ENCODE measurements at regions of chr11 and their contacts with region 1.

Region 1: DNA sequence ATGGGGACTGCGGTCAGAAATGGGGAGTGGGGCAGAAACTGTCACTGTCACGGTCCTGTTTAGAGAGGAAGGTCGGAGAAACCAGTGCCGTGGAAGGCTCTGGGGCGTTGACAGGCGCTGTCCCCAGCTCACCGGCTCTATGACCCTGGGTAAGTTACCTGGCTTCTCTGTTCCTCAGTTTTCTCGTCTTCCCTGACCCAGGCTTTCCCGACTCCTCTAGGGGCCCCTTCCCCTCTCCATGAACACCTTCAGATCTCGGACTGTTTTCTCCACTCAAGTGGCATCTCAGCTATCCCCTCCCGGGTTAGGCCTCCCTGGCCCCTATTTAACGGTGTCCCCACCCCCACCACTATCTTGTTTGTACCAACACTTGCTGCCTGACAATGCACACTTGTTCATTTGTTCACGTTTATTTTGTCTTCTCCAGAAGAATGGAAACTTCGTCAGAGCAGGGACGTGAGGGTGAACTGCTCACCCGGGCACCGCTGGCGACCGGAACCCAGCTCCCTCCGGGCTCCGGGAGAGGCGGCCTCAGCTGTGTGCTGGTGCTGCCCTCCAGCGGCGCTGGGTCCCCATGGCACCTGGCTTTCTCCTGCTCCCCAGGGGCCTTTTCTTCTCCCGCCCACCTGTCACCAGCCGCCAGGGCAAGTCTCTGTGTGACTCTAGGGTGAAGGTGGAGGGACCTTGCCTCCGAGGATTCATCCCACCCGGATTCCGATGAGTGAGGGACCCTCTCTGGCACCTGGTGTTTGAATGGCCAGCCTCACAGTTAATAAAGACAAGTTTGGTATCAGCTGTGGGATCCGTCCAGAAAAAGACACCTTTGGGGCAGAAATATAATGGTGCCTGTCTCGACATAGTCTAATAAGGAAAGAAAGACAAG is 33.1 kb upstream of the SLC35C1 start:
- DNase-seq: peak; percentile 68 to 81 (median 72)
- H3K4me3 ChIP-seq: peak overlapping the region; percentile 69 to 92
- H3K4me3 Mint-ChIP-seq: peak overlapping the region; percentile 90 to 95 (median 92)
- H3K27ac ChIP-seq: peak overlapping the region; percentile 64
- H3K27ac Mint-ChIP-seq: peak overlapping the region; percentile 81 to 92 (median 90)
- H3K4me1 ChIP-seq: peaks cover 22% of the 10 kb centered on the region
- H3K4me1 Mint-ChIP-seq: peaks cover 9 to 28% (median 22%) of the 10 kb centered on the region in 4 donors
- H3K27me3 ChIP-seq: no peaks in the 10 kb centered on the region
- H3K27me3 Mint-ChIP-seq: peaks cover 0 to 3% of the 10 kb centered on the region in 2 donors

Region 2: GRCh38 chr11:45339729-45340519 is 431.9 kb before region 1 on chr11:
- CTCF ChIA-PET with region 1: interaction called, 12 read pairs
- POLR2A ChIA-PET with region 1: interaction called, 4 read pairs
- intact Hi-C with region 1: loop called (anchors 1 kb)
- DNase-seq: peak; percentile 85 to 91 (median 87)
- H3K4me3 ChIP-seq: peak overlapping the region in 1 of 2 donors; percentile 36
- H3K4me3 Mint-ChIP-seq: peak overlapping the region; percentile 77 to 89 (median 82)
- H3K27ac ChIP-seq: no peak overlapping the region
- H3K27ac Mint-ChIP-seq: peak overlapping the region in 6 of 7 donors; percentile 16 to 87 (median 68)
- H3K4me1 ChIP-seq: peaks cover 13% of the 10 kb centered on the region
- H3K4me1 Mint-ChIP-seq: peaks cover 7 to 16% (median 10%) of the 10 kb centered on the region in 4 donors
- H3K27me3 ChIP-seq: no peaks in the 10 kb centered on the region
- H3K27me3 Mint-ChIP-seq: peaks cover 15% of the 10 kb centered on the region in 2 donors

Region 3: DNA sequence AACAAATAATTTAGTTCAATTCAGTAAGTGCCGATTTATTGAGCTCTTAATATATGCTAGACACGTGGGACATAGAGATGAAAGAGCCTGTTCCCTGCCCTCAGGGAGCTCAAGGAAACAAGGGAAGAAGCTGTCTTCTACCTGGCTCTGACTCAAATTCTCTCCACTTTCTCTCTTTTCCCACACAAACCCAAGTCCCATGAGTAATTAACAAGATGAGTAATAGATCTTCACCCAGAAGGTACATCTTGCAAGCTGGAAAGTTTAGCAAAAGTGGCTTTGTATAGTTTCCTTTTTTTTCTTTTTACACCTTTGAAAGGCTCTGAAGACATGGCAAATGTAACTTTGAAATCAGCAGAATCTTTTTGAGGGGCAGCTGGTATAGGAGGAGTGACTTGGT is 58.2 kb before region 1 on chr11:
- CTCF ChIA-PET with region 1: no interaction called
- POLR2A ChIA-PET with region 1: no interaction called
- intact Hi-C with region 1: no loop called
- DNase-seq: no peak
- H3K4me3 ChIP-seq: no peak overlapping the region
- H3K4me3 Mint-ChIP-seq: no peak overlapping the region
- H3K27ac ChIP-seq: no peak overlapping the region
- H3K27ac Mint-ChIP-seq: no peak overlapping the region
- H3K4me1 ChIP-seq: no peaks in the 10 kb centered on the region
- H3K4me1 Mint-ChIP-seq: no peaks in the 10 kb centered on the region
- H3K27me3 ChIP-seq: no peaks in the 10 kb centered on the region
- H3K27me3 Mint-ChIP-seq: peaks cover 21 to 40% of the 10 kb centered on the region in 2 donors

Region 4: DNA sequence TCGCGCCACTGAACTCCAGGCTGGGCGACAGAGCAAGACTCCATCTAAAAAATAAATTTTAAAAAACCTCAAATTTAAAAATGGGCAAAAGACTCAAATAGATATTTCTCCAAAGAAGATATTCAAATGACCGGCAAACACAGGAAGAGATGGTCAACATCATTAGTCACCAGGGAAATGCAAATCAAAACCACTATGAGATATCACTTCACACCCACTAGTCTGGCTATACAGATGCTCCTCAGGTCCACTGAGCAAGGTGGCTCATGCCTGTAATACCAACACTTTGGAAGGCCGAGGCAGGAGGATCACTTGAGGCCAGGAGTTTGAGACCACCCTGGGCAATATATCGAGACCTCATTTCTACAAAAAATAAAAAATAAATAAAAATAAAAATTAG is 10.1 kb before region 1 on chr11:
- CTCF ChIA-PET with region 1: interaction called, 14 read pairs
- POLR2A ChIA-PET with region 1: interaction called, 3 read pairs
- intact Hi-C with region 1: no loop called
- DNase-seq: no peak
- H3K4me3 ChIP-seq: no peak overlapping the region
- H3K4me3 Mint-ChIP-seq: no peak overlapping the region
- H3K27ac ChIP-seq: no peak overlapping the region
- H3K27ac Mint-ChIP-seq: no peak overlapping the region
- H3K4me1 ChIP-seq: no peaks in the 10 kb centered on the region
- H3K4me1 Mint-ChIP-seq: no peaks in the 10 kb centered on the region
- H3K27me3 ChIP-seq: no peaks in the 10 kb centered on the region
- H3K27me3 Mint-ChIP-seq: peaks cover 8 to 20% of the 10 kb centered on the region in 2 donors

Region 5: GRCh38 chr11:45804761-45805304 is 33.0 kb after region 1 on chr11 and contains the start of gene SLC35C1:
- CTCF ChIA-PET with region 1: interaction called, 33 read pairs
- POLR2A ChIA-PET with region 1: interaction called, 28 read pairs
- intact Hi-C with region 1: loop called (anchors 1 kb)
- DNase-seq: peak; percentile 93 to 94 (median 93)
- H3K4me3 ChIP-seq: peak within 1 kb of the TSS; percentile 90 to 95
- H3K4me3 Mint-ChIP-seq: peak within 1 kb of the TSS; percentile 90 to 96 (median 92)
- H3K27ac ChIP-seq: peak within 1 kb of the TSS; percentile 83
- H3K27ac Mint-ChIP-seq: peak within 1 kb of the TSS; percentile 83 to 94 (median 92)
- H3K4me1 ChIP-seq: peaks cover 48% of the 10 kb centered on the region
- H3K4me1 Mint-ChIP-seq: peaks cover 30 to 64% (median 38%) of the 10 kb centered on the region in 4 donors
- H3K27me3 ChIP-seq: no peaks in the 10 kb centered on the region
- H3K27me3 Mint-ChIP-seq: no peaks in the 10 kb centered on the region
- total RNA-seq, gene SLC35C1: 20.3 to 21.5 TPM

Region 6: GRCh38 chr11:45834298-45834756 is 62.5 kb after region 1 on chr11:
- CTCF ChIA-PET with region 1: interaction called, 12 read pairs
- POLR2A ChIA-PET with region 1: no interaction called
- intact Hi-C with region 1: no loop called
- DNase-seq: no peak
- H3K4me3 ChIP-seq: no peak overlapping the region
- H3K4me3 Mint-ChIP-seq: peak overlapping the region in 2 of 8 donors; percentile 4 to 77
- H3K27ac ChIP-seq: no peak overlapping the region
- H3K27ac Mint-ChIP-seq: peak overlapping the region in 5 of 7 donors; percentile 8 to 86 (median 81)
- H3K4me1 ChIP-seq: peaks cover 15% of the 10 kb centered on the region
- H3K4me1 Mint-ChIP-seq: peaks cover 8 to 12% (median 11%) of the 10 kb centered on the region in 4 donors
- H3K27me3 ChIP-seq: no peaks in the 10 kb centered on the region
- H3K27me3 Mint-ChIP-seq: peaks cover 0 to 2% of the 10 kb centered on the region in 2 donors

Region 7: GRCh38 chr11:46006418-46007070 is 234.7 kb after region 1 on chr11:
- CTCF ChIA-PET with region 1: interaction called, 30 read pairs
- POLR2A ChIA-PET with region 1: interaction called, 5 read pairs
- intact Hi-C with region 1: no loop called
- DNase-seq: peak in 4 of 5 donors; percentile 52 to 63 (median 56)
- H3K4me3 ChIP-seq: no peak overlapping the region
- H3K4me3 Mint-ChIP-seq: no peak overlapping the region
- H3K27ac ChIP-seq: no peak overlapping the region
- H3K27ac Mint-ChIP-seq: peak overlapping the region in 3 of 7 donors; percentile 29 to 79 (median 56)
- H3K4me1 ChIP-seq: no peaks in the 10 kb centered on the region
- H3K4me1 Mint-ChIP-seq: peaks cover 0 to 4% (median 2%) of the 10 kb centered on the region in 4 donors
- H3K27me3 ChIP-seq: no peaks in the 10 kb centered on the region
- H3K27me3 Mint-ChIP-seq: no peaks in the 10 kb centered on the region

Region 8: GRCh38 chr11:46554205-46555055 is 782.6 kb after region 1 on chr11:
- CTCF ChIA-PET with region 1: no interaction called
- POLR2A ChIA-PET with region 1: no interaction called
- intact Hi-C with region 1: no loop called
- DNase-seq: no peak
- H3K4me3 ChIP-seq: no peak overlapping the region
- H3K4me3 Mint-ChIP-seq: peak overlapping the region; percentile 20 to 77 (median 36)
- H3K27ac ChIP-seq: no peak overlapping the region
- H3K27ac Mint-ChIP-seq: peak overlapping the region; percentile 64 to 92 (median 77)
- H3K4me1 ChIP-seq: peaks cover 55% of the 10 kb centered on the region
- H3K4me1 Mint-ChIP-seq: peaks cover 47 to 68% (median 58%) of the 10 kb centered on the region in 4 donors
- H3K27me3 ChIP-seq: no peaks in the 10 kb centered on the region
- H3K27me3 Mint-ChIP-seq: no peaks in the 10 kb centered on the region